ENCODE measurements at regions of chr10 and their contacts with region 1.

Region 1: DNA sequence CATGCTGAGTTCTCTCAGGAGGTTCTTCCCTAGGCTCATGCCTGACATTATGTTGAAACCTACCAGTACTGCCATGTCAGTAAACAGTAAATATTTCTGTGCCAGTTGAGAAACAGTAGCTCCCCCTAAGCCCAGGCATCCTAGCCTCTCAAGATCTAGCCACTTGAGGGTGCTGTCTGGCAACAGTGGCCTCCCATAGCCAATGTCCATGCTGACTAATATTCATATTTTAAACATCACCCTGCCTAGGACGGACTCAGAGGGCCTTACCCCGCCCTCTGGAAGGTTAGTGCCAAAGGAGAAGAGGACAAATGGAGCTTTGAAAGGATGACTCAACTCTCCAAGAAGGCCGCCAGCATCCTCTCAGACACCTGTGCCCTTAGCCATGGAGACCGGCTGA is 7.7 kb downstream of the ACSM6 start:
- DNase-seq: no peak
- H3K4me3 ChIP-seq: no peak overlapping the region
- CTCF ChIP-seq: peak; percentile 29

Region 2: GRCh38 chr10:95183271-95184230 is 18.2 kb before region 1 on chr10:
- CTCF ChIA-PET with region 1: interaction called, 13 read pairs
- POLR2A ChIA-PET with region 1: no interaction called
- DNase-seq: no peak
- H3K4me3 ChIP-seq: peak overlapping the region; percentile 63
- CTCF ChIP-seq: peak; percentile 99

Region 3: DNA sequence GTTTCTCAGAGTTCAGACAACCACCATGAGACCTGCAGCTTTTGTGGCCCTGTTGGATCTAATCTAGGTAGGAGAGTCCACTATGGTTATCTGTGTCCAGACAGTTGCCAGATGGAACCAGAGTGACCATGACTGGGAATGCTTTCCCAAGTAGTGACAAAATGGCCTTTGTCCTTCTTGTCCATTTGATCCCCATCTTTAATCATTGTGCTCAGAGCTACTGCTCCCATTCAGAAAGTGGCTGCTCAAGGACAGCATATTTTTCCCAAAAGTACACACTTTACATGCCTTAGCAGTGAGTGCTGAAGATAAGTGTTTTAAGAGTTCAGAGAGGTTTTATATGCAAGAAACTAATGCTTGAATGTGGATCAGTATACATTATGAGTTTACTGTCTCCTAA is 13.1 kb before region 1 on chr10:
- CTCF ChIA-PET with region 1: interaction called, 13 read pairs
- POLR2A ChIA-PET with region 1: no interaction called
- DNase-seq: no peak
- H3K4me3 ChIP-seq: no peak overlapping the region
- CTCF ChIP-seq: no peak

Region 4: GRCh38 chr10:95236068-95236903 is 34.5 kb after region 1 on chr10:
- CTCF ChIA-PET with region 1: interaction called, 84 read pairs
- POLR2A ChIA-PET with region 1: no interaction called
- DNase-seq: no peak
- H3K4me3 ChIP-seq: no peak overlapping the region
- CTCF ChIP-seq: no peak

Measured in AG04449 (cell line).